GM10248 (cell line): ENCODE measurements at regions of chr17 and their contacts with region 1.

Region 1: DNA sequence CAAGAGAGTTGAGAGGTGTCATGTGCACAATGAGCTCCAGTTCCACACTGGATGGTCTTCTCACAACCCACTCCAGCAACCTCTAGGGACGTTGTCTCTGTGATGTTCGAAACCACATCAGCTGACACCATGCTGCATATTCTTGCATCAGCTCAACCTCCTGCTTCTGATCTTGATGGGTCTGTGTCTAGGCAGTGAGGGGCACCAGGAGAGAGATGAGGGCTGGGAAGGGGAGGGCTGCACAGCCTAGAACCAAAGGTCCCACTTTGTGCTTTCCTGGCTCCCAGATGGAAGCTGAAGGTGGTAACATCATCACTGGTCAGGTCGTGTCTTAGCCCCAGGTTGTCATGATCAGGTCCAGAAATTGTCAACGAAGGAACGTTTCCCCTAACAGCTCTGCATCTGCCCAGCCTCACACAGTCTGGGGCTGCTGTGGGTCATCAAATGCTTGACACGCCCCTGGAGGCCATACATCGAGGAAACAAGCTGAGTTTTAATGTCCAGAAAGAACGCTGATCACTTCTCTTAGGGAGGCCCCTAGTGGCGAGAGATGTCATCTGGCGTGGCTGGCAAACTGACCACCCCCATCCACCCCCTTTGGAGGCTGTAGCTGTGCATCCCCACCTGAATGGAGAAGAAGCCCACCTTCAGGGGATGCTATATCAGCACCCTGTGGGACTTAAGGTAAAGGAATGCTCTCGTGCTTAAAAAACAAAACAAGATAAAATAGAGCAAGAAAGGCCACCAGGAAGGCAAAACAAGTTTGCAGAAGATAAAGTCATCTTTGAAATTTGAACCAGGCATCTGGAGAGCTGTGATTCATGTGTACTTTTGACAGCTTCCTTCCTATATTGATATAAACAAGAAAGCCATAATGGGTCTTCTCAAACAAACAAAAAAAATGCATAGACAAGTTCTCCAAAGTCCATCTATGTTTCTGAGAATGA is 58.3 kb downstream of the WIPI1 start:
- DNase-seq: peak; percentile 88
- CTCF ChIP-seq: peak; percentile 74

Region 2: DNA sequence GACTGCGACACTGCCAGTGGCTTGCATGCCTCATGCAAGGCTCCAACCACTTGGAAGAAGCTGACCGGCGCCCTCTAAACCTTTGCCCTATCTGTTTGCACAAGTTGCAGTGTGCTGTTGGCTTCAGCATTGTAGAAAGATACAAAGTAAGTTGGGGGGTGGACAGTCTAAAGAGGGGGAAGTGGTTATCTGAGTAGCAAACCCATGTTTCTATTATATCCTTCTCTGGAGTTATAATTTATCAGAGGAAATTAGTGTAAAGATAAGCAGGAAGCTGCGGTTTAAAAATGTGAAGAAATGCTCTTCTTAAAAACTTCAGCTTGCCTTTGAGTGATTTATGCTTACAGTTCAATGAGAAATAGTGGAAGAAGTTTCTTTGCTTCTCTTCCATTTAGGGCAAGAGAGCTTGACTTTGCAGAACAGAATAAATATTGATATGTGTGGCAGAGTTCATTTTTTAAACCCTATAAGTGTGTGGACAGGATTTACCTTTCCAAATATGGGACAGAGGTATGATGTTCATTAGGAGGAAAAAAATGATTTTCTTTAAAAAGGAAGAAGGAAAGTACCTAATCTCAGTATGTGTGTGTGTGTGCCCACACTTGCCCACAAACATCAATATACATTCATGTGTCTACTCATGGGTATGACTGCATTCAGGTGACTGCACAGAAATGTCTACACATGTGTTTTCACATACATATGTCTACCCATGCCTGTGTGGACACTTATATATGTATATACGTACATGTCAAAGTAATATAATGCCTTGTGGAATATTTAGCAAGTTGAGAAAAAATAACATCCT is 143.0 kb before region 1 on chr17:
- CTCF ChIA-PET with region 1: interaction called, 33 read pairs
- POLR2A ChIA-PET with region 1: no interaction called
- DNase-seq: no peak
- CTCF ChIP-seq: no peak

Region 3: DNA sequence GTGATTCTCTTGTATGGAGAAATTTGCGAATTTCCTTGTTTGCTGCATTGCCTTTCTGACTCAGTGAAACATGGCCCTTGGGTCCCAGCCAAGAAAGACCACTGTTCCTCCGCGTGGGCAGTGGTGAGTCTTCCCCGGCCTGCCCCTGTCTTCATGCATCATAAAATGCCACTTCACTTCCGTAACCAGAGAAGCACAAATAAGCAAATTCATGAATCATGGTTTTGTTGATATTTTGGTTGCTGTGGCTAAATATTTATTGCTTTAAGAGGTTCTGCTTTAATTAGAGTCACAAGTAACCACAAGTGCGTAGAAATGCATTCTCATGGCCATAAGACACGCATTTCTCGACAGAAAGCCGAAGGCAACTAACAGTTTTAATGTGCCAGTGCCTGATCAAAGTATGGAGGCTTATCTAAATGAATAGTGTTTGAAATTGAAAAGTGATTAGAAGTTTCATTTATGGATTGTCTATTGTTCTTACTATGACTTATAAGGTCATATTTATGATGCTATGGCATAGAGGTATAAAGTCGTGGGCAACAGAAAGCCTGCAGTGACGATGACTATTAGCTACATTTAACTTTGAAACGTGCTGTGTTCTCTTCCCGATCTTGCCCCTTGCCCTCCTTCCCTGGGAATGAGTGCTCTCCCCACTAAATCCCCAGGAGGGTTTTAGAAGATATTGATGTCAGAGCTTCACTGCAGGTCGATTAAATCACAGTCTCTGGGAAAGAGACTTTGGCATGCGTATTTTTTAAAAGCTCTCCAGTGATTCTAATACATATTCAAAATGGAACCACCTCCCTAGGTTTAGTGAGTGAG is 17.7 kb before region 1 on chr17:
- CTCF ChIA-PET with region 1: interaction called, 17 read pairs
- POLR2A ChIA-PET with region 1: no interaction called
- DNase-seq: no peak
- CTCF ChIP-seq: no peak

Region 4: DNA sequence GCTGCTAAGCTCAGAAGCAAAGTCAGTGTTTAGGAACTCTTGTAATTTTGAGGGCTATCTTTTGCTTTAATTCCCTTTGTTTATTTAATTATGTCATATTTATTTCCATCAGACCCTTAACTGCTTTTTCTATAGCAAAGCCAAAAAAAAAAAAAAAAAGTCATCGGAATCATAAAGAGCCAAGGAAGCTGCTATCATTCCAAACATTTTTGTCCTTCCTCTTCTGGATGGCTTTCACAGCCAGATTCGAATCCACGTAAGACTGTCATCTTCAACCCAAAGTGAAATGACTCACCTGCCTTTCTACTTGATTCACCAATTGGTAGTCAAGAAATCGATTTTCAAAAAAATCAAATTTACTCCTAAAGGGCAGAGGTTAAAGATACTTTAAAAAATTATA is 19.9 kb after region 1 on chr17:
- CTCF ChIA-PET with region 1: interaction called, 32 read pairs
- POLR2A ChIA-PET with region 1: no interaction called
- DNase-seq: no peak
- CTCF ChIP-seq: no peak

Region 5: GRCh38 chr17:68435876-68436842 is 37.2 kb after region 1 on chr17:
- CTCF ChIA-PET with region 1: interaction called, 17 read pairs
- POLR2A ChIA-PET with region 1: no interaction called
- DNase-seq: peak; percentile 78
- CTCF ChIP-seq: peak; percentile 97

Region 6: GRCh38 chr17:68452724-68453290 is 53.8 kb after region 1 on chr17:
- CTCF ChIA-PET with region 1: no interaction called
- POLR2A ChIA-PET with region 1: no interaction called
- DNase-seq: no peak
- CTCF ChIP-seq: no peak

Region 7: DNA sequence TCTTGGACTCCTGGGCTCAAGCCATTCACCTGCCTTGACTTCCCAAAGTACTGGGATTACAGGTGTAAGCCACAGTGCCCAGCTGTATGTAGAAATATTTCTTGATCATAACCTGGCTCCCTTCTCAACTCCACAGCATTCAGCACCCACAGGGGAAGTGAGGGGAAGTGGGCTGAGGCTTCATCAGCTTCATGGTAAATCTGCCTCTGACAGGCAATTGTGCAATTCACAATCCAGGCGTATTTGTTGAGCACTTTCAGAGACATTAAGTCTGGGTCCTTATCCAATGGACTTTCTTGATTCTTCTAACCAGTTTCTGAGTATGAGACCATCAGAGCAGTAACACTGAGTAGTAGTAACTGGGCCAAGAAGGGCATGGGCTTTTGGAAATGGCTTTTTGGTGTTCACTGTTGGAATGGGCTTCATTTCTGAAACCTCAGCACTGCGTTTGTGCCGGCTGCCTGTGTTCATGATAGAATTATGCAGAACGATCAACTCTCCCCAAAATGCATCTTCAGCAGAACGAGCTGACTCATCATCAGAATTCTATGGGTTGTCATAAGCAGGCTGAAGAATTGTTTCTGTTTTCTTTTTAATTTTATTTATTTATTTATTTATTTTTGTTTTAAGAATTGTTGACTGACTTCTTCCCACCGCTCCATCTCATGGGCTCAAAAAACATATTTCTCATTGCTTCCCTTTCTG is 173.3 kb after region 1 on chr17:
- CTCF ChIA-PET with region 1: no interaction called
- POLR2A ChIA-PET with region 1: no interaction called
- DNase-seq: no peak
- CTCF ChIP-seq: no peak